ENCODE measurements at regions of chr2 and their contacts with region 1.

Region 1: DNA sequence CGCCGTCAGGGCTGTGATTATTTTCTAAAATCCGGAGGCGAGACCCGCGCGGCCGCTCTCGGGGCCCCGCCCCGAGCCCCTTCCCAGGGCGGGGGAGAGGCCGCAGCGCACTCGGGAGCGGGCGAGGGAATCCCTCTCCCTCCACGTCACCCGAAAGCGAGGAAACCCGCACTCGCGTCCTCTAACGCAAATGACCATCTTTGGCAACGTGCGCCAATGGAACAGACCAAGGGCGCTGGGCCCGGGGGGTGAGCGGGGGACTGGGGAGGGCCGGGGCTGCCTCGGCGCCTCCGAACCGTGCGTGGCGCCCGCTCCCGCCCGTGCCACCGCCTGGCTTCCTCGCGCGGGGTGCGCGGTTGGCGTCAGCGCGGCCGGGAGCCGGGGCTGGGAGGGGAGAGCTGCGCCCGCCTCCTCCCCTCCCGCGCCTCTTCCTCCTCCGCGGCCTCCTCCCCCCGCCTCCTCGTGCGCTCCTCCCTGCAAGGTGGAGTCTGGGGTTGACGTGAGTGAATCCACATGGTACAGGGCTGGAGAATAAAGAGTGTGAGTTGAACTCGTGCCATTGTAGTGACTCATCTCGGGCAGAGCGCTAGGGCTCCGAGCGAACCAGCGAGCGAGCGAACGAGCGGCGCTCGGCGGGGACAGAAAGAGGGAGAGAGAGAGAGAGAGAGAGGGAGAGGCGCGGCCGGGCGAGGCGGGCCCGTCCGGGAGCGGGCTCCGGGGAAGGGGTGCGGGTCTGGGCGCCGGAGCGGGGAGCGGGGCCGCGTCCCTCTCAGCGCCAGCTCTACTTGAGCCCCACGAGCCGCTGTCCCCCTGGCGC is at the start of gene FOSL2:
- DNase-seq: peak; percentile 97
- H3K4me3 ChIP-seq: peak within 1 kb of the TSS; percentile 21 to 94 (median 91)
- H3K27ac ChIP-seq: peak within 1 kb of the TSS; percentile 99 to 100 (median 100)
- H3K4me1 ChIP-seq: peaks cover 13 to 29% of the 10 kb centered on the region in 2 donors
- H3K27me3 ChIP-seq: no peaks in the 10 kb centered on the region
- CTCF ChIP-seq: peak in 2 of 6 experiments; percentile 0 to 1
- POLR2A ChIP-seq: peak; percentile 90 to 100
- total RNA-seq, gene FOSL2: 30.7 to 85.1 (median 40.6) TPM

Region 2: GRCh38 chr2:27703638-27704341 is 688.7 kb before region 1 on chr2:
- intact Hi-C with region 1: loop called (anchors 5 kb)
- DNase-seq: peak; percentile 78 to 86
- H3K4me3 ChIP-seq: no peak overlapping the region
- H3K27ac ChIP-seq: no peak overlapping the region
- H3K4me1 ChIP-seq: peaks cover 0 to 24% of the 10 kb centered on the region in 2 donors
- H3K27me3 ChIP-seq: no peaks in the 10 kb centered on the region
- CTCF ChIP-seq: peak; percentile 84 to 97 (median 88)
- POLR2A ChIP-seq: no peak

Region 3: DNA sequence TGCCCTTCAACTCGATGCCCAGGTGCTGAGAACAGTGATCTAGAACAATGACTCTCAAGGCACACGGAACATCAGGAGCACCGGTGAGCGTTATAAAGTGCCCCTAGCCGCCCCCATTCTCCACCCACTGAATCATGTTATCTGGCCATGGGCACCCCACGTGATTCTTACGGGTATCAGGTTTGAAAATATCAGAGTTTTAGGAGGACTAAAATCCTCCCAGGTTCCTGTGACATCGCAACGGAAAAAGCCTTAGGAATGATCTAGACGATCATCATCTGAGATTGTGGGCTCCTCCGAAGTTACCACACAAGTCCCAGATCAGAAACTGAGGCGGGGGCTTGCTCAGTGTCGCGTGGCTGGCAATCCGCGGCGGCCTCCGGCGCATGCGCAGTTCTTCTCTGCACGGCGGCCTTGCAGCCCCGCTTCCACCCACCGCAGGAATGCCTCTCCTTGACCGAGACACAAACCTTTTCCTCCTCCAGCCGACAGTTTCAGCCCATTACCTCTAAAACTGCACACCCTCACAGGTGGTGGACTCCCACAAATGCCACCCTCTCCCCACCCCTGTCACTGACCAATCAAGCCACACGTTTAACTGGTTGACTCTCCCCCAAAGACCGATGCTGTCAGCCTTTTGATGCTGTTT is 626.8 kb before region 1 on chr2:
- intact Hi-C with region 1: loop called (anchors 10 kb)
- DNase-seq: peak; percentile 75 to 77
- H3K4me3 ChIP-seq: no peak overlapping the region
- H3K27ac ChIP-seq: no peak overlapping the region
- H3K4me1 ChIP-seq: peaks cover 0 to 10% of the 10 kb centered on the region in 2 donors
- H3K27me3 ChIP-seq: no peaks in the 10 kb centered on the region
- CTCF ChIP-seq: no peak
- POLR2A ChIP-seq: peak in 1 of 2 donors; percentile 6

Region 4: DNA sequence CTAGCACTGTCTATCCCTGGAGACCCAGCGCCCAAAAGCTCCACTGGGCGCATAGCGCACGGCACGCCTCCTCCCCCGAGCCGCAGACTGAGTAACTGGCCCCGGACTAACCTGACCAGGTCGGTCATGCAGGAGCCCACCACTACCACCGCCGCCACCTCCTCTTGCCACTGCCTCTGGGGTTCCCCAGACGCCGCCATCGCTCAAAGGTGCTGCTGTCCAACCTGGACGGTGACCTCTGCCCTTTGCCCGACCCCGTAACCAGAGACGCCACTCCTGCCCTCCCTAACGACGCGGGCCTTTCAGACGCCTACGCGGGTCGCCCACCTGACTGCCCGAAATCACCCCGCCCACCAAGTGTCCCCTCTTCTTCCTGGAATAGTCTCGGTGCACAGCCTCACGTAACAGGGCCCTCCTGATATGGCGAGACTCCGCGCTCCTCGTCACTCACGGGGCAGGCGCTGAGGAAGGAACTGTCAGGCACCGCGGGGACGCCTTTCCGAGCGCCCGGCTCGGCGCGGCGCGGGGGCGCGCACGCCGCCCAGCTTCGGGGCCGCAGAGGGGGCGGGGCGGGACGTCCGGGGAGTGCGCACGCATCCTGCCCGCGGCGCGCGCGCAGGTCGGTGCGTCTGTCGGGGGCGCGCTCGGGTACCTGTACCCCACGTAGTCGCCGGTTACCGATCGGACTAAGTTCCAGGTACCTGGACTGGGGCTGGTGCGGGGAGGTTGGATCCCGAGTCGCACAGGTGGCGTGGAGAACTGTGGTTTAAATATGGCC is 502.2 kb before region 1 on chr2 and contains the starts of genes BABAM2 and RBKS:
- intact Hi-C with region 1: loop called (anchors 10 kb)
- DNase-seq: peak; percentile 81 to 84
- H3K4me3 ChIP-seq: peak within 1 kb of the TSS; percentile 46 to 90 (median 86)
- H3K27ac ChIP-seq: peak within 1 kb of the TSS; percentile 93 to 98 (median 93)
- H3K4me1 ChIP-seq: peaks cover 9 to 16% of the 10 kb centered on the region in 2 donors
- H3K27me3 ChIP-seq: no peaks in the 10 kb centered on the region
- CTCF ChIP-seq: peak in 1 of 6 experiments; percentile 6
- POLR2A ChIP-seq: peak; percentile 50 to 81
- total RNA-seq, gene BABAM2: 33.2 to 70.3 (median 38.6) TPM
- total RNA-seq, gene RBKS: 6.9 to 10.6 (median 8.1) TPM

Region 5: DNA sequence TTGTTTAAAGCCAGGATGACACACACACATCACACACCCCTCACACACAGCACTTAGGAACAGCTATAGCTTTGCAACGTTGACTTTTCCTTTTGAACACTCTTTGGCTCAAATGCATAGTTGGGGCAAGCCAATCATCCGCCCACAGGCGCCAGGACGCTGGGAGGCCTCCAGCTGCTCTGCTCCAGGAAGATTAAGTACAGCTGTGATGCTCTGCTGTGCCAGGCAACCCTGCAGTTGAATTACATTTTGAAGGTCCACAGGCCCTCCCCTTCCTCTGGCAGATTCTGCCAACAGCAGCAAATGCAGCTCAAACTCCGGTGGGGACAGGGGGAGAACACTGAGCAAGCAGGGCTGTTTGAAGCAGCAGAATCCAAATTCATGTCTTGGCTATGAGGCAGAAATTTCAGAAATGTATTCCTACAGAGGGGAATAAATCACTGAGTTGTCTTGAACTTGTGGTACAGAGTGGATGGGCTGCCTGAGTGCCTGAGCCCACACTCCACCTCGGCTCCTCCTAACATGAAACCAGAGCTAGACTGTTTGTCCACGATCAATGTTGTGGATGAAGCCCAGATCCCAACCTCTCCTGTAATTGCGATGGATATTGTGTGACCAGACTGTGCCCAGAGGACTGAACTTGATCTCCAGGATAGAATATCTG is 272.7 kb after region 1 on chr2:
- intact Hi-C with region 1: no loop called
- DNase-seq: peak; percentile 52 to 56
- H3K4me3 ChIP-seq: no peak overlapping the region
- H3K27ac ChIP-seq: peak overlapping the region; percentile 50 to 62 (median 52)
- H3K4me1 ChIP-seq: peaks cover 28 to 48% of the 10 kb centered on the region in 2 donors
- H3K27me3 ChIP-seq: no peaks in the 10 kb centered on the region
- CTCF ChIP-seq: no peak
- POLR2A ChIP-seq: no peak

Measured in thyroid gland (tissue), 4 donors.